Activated T-helper 1 cell treated with anti-CD3 and anti-CD28 coated beads, Interleukin-12 subunit alpha, Interleukin-12 subunit beta, Interleukin-2, Interleukin-4 antibody, amounts not matched to agents 30 ng/mL and 10 ng/mL and 1 ng/mL, durations not matched to agents 14 hours and 24 hours and 36 hours (primary cell): ENCODE measurements at regions of chr2 and their contacts with region 1.

Region 1: GRCh38 chr2:218979846-218980734 is 4.9 kb downstream of the FEV start:
- DNase-seq: peak; percentile 68
- H3K4me3 Mint-ChIP-seq: no peak overlapping the region
- H3K27ac Mint-ChIP-seq: peak overlapping the region; percentile 79
- H3K4me1 Mint-ChIP-seq: peaks cover 6% of the 10 kb centered on the region
- H3K27me3 Mint-ChIP-seq: peaks cover 66% of the 10 kb centered on the region

Region 2: DNA sequence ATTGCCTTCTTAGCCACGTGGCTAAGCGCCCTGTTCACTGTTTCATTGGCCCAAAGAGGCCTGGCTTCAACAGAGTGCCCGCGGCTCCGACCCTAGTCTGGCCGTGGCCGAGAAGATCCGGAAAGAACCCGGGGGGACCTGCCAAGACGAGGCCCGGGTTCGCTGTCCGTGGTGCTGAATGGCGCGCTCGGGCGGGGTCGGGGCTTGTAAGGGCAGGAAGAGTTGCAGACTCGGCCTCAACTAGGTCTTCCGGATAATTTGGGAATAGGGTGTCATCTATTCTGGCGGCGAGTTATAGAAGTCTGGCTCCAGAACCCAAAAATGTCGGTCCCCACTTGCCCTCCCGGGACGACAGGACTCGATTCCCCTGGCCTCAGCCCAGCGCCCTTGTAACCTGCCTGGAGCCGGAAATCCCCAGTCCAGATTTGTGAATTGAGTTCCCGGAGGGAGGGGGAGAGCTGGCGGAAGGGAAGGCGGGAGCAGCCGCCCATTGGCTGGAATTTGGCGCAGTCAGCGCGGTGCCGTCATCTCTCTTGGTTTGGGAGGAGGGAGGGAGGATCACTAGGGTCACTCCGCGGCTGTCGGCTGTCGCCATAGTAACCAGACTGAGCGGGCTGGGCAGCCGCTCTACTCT is 17.1 kb before region 1 on chr2:
- intact Hi-C with region 1: loop called (anchors 1 kb)
- DNase-seq: peak; percentile 33
- H3K4me3 Mint-ChIP-seq: no peak overlapping the region
- H3K27ac Mint-ChIP-seq: no peak overlapping the region
- H3K4me1 Mint-ChIP-seq: no peaks in the 10 kb centered on the region
- H3K27me3 Mint-ChIP-seq: peaks cover 48% of the 10 kb centered on the region

Region 3: DNA sequence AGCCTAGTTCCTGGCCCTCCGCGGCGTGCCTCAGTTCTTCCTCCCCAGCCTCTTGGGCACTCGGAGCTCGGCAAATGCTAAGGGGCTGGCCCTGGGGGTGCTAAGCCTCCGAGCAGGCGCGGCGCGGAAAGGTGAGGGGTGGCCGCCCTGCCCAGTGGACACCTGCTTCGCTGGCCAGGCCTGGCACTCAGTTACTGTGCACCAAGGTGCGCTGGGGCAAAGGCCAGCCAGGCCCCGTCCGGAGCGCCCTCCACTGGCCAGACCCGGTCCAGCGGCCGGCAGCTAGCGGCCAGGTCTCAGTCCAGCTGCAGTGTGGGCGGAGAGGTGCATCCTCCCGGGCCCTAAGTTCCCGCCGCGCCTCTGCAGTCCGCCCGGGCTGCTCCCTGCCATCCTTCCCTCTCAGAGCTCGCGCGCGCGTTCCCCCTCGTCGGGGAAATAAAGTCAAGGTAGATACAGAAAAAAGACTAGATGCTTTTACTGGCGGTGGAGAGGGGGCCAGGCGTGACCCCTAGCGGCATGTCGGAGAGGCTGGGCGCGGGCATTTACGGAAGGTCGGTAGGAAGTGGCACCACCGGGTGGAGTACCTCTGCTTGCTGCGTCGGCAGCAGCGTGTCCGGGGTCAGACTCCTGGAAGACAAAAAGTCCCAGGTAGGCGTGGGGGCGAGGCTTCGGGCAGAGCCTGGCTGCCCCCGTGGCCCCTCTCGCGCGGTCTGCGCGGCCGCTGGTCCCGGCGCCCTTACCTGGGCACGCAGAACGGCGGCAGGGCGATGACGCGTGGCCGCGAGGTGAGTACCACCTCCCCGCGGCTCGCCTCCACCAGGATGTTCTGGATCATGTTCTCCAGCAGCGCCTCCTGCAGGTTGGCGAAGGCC is 22.5 kb after region 1 on chr2:
- intact Hi-C with region 1: loop called (anchors 1 kb)
- DNase-seq: no peak
- H3K4me3 Mint-ChIP-seq: no peak overlapping the region
- H3K27ac Mint-ChIP-seq: no peak overlapping the region
- H3K4me1 Mint-ChIP-seq: no peaks in the 10 kb centered on the region
- H3K27me3 Mint-ChIP-seq: peaks cover 53% of the 10 kb centered on the region

Region 4: DNA sequence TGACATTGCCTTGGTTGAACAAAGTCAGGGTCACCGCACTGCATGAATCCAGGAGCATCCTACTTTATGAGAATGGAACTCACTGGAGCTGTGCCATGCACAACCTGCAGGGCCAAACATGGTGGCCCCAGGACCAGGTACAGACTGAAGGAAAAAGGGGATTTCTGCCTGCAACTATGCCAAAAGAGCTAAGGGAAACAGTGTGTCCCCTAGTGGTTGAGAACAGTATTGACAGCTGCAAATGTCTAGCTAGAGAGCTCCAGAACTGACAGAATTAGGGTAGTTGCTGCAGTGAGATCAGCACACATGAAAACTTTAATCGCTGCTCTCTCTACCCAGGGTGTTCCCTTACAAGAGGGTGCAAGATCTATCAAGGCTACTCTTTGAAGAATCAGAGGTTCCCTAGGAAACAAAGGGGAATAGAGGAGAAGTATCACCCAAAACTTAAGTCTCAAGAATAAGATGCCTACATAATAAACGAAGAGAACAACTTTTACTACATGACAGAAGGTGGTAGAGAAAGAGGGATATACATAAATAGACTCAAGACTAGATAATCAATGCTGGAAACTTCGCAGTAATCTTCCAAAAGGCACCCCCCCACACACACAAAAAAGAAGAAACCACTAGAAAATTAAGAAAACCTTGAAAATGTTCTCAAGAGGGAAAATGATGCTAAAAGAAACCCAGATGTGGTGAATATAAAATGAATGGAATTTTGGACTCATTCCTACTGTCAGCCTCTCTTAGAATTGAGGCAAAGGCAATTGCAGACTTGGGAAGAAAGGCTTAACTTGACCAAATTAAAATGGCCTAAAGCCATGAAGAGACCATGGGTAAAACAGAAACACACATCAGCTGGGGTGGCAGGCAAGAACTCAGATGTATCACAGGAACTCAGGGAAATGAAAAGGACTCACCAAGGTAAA is 124.3 kb after region 1 on chr2:
- intact Hi-C with region 1: no loop called
- DNase-seq: peak; percentile 6
- H3K4me3 Mint-ChIP-seq: no peak overlapping the region
- H3K27ac Mint-ChIP-seq: peak overlapping the region; percentile 59
- H3K4me1 Mint-ChIP-seq: peaks cover 28% of the 10 kb centered on the region
- H3K27me3 Mint-ChIP-seq: peaks cover 1% of the 10 kb centered on the region

Region 5: DNA sequence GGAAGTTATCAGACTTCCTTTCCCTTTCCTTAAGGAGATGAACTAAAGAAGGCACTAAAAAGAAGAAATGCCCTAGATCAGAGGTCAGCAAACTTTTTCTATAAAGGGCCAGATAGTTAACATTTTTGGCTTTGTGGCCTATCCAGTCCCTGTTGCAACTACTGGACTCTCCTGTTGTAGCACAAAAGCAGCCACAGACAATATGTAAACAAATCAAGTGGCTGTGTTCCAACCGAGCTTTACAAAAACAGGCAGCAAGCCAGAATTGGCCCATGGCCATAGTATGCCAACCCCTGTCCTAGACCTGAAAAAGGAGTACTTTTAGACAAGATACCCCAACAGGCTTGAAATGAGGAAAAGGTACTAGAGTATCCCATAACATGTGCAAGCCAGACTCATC is 169.6 kb after region 1 on chr2:
- intact Hi-C with region 1: loop called (anchors 5 kb)
- DNase-seq: no peak
- H3K4me3 Mint-ChIP-seq: no peak overlapping the region
- H3K27ac Mint-ChIP-seq: no peak overlapping the region
- H3K4me1 Mint-ChIP-seq: no peaks in the 10 kb centered on the region
- H3K27me3 Mint-ChIP-seq: no peaks in the 10 kb centered on the region